ENCODE measurements at regions of chr11 and their contacts with region 1.

Region 1: GRCh38 chr11:95231127-95231880 is at the start of gene SESN3:
- DNase-seq: peak; percentile 90

Region 2: DNA sequence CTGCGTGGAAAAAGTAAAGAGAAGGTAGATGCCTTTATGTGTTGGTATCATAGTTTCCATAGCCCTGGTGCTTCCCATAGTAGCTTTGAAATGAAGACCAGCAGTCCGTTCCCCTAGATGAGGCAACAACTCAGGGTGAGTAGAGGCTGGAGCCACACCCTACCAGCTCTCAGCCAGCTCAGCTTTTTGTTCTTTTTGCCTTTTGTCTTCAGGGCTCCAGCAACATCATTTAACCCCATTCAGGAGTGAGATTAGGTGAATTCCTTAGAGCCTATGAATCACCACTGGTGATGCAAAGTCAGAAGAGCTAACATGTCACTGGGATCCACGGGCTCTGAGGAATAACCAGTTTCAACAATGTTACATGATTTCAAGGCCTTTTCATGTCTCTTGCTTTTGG is 13.7 kb after region 1 on chr11:
- CTCF ChIA-PET with region 1: interaction called, 4 read pairs
- POLR2A ChIA-PET with region 1: interaction called, 19 read pairs
- DNase-seq: no peak

Region 3: GRCh38 chr11:95371153-95371552 is 139.8 kb after region 1 on chr11:
- CTCF ChIA-PET with region 1: no interaction called
- POLR2A ChIA-PET with region 1: interaction called, 10 read pairs
- DNase-seq: no peak

Region 4: DNA sequence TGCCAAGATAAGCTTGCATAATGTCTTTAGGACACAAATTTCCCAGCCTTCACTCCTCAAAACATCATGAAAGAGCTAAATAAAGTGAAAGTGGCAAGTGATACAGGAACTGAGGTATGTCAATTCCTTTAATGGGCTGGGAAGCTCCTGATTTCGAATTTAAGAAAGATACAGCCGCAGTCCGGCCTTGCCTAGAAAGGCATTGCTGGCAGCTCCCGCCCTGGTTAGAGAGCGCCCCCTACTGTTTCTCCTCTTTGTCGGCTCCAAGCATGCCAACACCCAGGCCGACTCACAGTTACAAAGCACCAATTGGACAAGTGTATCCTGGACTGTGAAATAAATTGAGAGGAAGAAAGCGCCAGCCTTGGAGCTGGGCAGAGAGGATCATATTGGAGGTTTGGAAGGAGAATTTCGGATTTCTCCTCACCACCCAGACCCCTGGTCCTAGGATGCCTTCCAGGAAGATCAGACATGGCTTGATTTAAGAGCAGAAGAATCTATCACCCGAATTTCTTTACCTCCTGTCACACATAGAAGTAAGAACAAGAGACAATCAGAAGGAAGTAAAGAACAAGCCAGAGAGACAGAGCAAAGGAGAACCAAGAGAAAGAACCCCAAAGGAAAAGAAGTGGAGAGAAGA is 474.3 kb after region 1 on chr11:
- CTCF ChIA-PET with region 1: interaction called, 14 read pairs
- POLR2A ChIA-PET with region 1: interaction called, 6 read pairs
- DNase-seq: peak; percentile 82

Measured in HEK293T (cell line).